ENCODE measurements at regions of chr12 and their contacts with region 1.

Region 1: GRCh38 chr12:51217968-51218606 is at the start of gene POU6F1:
- DNase-seq: peak; percentile 77
- ATAC-seq: peak; percentile 92 to 97 (median 94)
- H3K4me3 ChIP-seq: peak within 1 kb of the TSS; percentile 84 to 98 (median 90)
- H3K27ac ChIP-seq: peak within 1 kb of the TSS; percentile 90 to 98 (median 96)
- H3K4me1 ChIP-seq: peaks cover 6 to 26% (median 19%) of the 10 kb centered on the region in 9 donors
- H3K27me3 ChIP-seq: no peaks in the 10 kb centered on the region
- CTCF ChIP-seq: peak; percentile 53 to 64 (median 59)
- total RNA-seq, gene POU6F1: 4.9 to 13.9 (median 7.8) TPM

Region 2: GRCh38 chr12:51047655-51048540 is 170.2 kb before region 1 on chr12 and contains the start of gene LETMD1:
- intact Hi-C with region 1: loop called in 1 of 10 experiments (anchors 5 kb)
- DNase-seq: peak; percentile 86 to 97
- ATAC-seq: peak; percentile 99 to 100 (median 100)
- H3K4me3 ChIP-seq: peak within 1 kb of the TSS; percentile 65 to 90 (median 84)
- H3K27ac ChIP-seq: peak within 1 kb of the TSS; percentile 91 to 98 (median 94)
- H3K4me1 ChIP-seq: peaks cover 0 to 31% (median 21%) of the 10 kb centered on the region in 9 donors
- H3K27me3 ChIP-seq: no peaks in the 10 kb centered on the region
- CTCF ChIP-seq: peak; percentile 73 to 99 (median 90)
- total RNA-seq, gene LETMD1: 17.3 to 27.3 (median 22.3) TPM

Region 3: GRCh38 chr12:51122844-51123243 is 95.2 kb before region 1 on chr12:
- intact Hi-C with region 1: loop called in 1 of 10 experiments (anchors 5 kb)
- DNase-seq: no peak
- ATAC-seq: no peak
- H3K4me3 ChIP-seq: no peak overlapping the region
- H3K27ac ChIP-seq: no peak overlapping the region
- H3K4me1 ChIP-seq: peaks cover 0 to 11% (median 4%) of the 10 kb centered on the region in 9 donors
- H3K27me3 ChIP-seq: no peaks in the 10 kb centered on the region
- CTCF ChIP-seq: no peak

Region 4: DNA sequence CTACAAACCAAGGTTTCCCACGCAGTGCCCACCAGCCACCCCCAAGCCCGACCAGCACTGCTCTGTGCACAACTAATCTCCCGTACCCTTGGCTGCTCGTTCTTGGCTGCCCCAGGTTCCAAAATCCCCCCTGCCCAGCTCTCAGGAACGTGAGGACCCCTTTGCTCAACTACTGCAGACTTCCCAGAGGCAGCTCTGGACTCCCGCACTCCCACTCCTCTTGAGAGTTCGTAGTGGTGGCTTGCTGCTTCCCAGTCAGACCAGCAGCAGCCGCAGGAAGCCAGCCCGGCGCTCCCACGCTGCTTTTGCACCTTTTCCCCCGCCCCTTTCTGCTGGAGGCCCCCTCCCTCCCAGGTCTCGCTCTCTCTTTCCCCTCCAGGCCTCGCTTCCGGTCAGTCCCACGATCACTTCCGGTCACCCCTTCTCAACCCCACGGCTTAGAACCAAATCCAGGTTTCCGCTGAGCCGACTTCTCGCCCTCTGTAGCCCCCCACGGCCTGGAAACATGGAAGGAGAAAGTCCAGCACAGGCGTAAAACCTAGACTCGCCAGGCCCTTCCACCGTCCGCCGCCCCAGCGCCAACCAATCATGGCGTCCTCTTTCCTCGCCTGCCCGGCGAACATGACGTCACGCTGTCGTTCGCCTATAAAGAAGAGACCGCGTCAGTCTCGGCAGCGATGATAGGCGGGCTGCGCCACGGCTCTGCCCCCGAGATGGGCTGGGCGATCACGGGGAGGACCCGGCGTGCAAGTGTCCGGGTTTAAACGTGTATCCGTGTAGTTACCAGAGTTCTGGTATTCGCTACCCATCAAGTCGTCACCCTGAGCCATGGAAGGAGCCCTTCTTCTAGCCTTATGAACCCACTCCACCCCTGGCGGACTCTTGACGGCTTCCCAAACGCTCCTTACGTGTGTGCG is 45.3 kb before region 1 on chr12 and contains the start of gene TFCP2:
- intact Hi-C with region 1: loop called in 3 of 10 experiments (anchors 1 to 5 kb)
- DNase-seq: peak; percentile 96 to 97
- ATAC-seq: peak; percentile 98 to 100 (median 99)
- H3K4me3 ChIP-seq: peak within 1 kb of the TSS; percentile 64 to 91 (median 76)
- H3K27ac ChIP-seq: peak within 1 kb of the TSS; percentile 89 to 99 (median 96)
- H3K4me1 ChIP-seq: peaks cover 3 to 33% (median 25%) of the 10 kb centered on the region in 9 donors
- H3K27me3 ChIP-seq: no peaks in the 10 kb centered on the region
- CTCF ChIP-seq: peak in 1 of 9 donors; percentile 4
- total RNA-seq, gene TFCP2: 19.3 to 30.9 (median 25.5) TPM

Region 5: GRCh38 chr12:51183816-51184215 is 34.3 kb before region 1 on chr12:
- intact Hi-C with region 1: no loop called
- DNase-seq: peak; percentile 46 to 65
- ATAC-seq: peak; percentile 52 to 94 (median 83)
- H3K4me3 ChIP-seq: no peak overlapping the region
- H3K27ac ChIP-seq: peak overlapping the region in 3 of 10 donors; percentile 21 to 28 (median 25)
- H3K4me1 ChIP-seq: peaks cover 0 to 5% (median 0%) of the 10 kb centered on the region in 9 donors
- H3K27me3 ChIP-seq: no peaks in the 10 kb centered on the region
- CTCF ChIP-seq: no peak

Region 6: DNA sequence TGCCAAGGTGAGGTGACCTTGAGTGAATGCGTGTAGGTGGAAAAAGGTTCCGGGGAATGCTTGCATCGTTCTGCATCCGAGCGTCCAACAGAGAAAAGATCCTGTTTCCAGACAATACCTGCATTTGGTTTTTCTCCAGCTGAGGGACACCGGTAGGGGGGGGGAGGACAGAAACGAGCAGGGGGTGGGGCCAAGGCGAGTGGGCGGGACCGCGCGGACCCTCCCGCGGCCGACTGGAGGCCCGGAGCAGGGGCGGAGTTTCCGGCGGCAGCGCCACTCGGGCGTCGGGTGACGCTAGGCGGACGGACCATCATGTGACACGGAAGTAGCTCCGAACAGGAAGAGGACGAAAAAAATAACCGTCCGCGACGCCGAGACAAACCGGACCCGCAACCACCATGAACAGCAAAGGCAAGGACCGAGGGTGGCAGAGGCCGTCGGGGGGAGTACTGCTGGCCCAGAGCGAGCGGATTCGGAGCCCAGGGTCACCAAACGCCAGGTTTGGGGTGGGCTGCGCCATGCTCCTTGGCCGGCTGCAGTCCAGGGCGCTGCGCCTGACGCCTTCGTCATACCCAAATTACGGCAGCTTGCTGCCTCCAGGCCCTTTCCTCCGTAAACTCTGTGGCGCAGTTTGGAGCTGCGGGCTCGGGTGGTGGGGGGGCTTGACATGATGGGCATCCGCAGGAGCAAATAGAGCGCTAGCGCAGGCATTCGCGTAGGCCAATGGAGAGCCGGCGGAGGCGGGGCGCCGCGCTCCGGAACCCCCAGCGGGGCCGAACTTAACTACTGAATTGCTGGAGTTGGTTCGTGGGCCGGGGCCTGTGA is 20.6 kb after region 1 on chr12 and contains the start of gene DAZAP2:
- intact Hi-C with region 1: loop called in 2 of 10 experiments (anchors 2 kb)
- DNase-seq: peak; percentile 96 to 97
- ATAC-seq: peak; percentile 98 to 99 (median 99)
- H3K4me3 ChIP-seq: peak within 1 kb of the TSS; percentile 68 to 100 (median 92)
- H3K27ac ChIP-seq: peak within 1 kb of the TSS; percentile 96 to 100 (median 100)
- H3K4me1 ChIP-seq: peaks cover 8 to 47% (median 21%) of the 10 kb centered on the region in 9 donors
- H3K27me3 ChIP-seq: no peaks in the 10 kb centered on the region
- CTCF ChIP-seq: peak in 6 of 9 donors; percentile 6 to 54 (median 37)
- total RNA-seq, gene DAZAP2: 140 to 185 (median 165) TPM

Region 7: DNA sequence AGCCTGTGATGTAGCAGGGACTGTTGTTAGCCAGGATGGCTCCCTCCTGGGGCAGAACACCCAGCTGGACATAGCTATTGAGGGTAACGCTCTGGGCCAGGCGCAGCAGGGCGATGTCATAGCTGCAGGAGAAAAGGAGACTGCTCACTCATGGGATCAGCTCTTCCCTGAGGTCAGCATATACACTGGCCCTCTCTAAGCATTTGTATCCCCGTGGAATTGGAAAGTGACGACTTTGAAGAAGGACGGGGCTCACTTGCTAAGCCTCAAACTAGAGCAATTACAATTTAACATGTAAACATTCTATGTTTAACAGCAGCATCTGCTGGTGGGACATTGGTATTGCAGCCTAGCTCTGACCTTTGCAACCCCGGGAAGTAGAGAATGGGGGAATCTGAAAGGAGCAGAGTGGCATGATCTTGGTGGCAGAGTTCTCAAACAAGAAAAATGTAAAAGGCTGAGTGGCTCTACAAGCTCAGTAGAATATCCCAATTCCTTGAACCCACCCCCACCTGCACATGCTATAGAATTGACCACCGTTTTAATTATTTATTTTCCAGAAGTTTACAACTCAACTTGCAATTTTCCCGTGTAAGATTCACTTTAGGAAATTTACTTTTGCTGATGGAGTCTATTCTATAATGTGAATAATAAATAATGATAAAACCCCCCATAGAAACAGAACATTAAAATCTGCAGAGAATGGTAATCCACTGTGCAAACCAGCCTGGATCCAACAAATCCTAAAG is 123.3 kb after region 1 on chr12:
- intact Hi-C with region 1: loop called in 1 of 10 experiments (anchors 5 kb)
- DNase-seq: peak in 1 of 2 donors; percentile 59
- ATAC-seq: peak; percentile 72 to 90 (median 86)
- H3K4me3 ChIP-seq: peak overlapping the region in 5 of 10 donors; percentile 21 to 33 (median 28)
- H3K27ac ChIP-seq: peak overlapping the region in 1 of 10 donors; percentile 56
- H3K4me1 ChIP-seq: peaks cover 0 to 9% (median 4%) of the 10 kb centered on the region in 9 donors
- H3K27me3 ChIP-seq: no peaks in the 10 kb centered on the region
- CTCF ChIP-seq: peak; percentile 84 to 98 (median 97)

Measured in heart right ventricle (tissue), 16 donors.